Pancreas (tissue), 10 donors: ENCODE measurements at regions of chr15 and their contacts with region 1.

Region 1: GRCh38 chr15:71777216-71777950 is 33.0 kb upstream of the NR2E3 start:
- DNase-seq: no peak
- ATAC-seq: no peak
- H3K4me3 ChIP-seq: no peak overlapping the region
- H3K27ac ChIP-seq: no peak overlapping the region
- H3K4me1 ChIP-seq: no peaks in the 10 kb centered on the region
- H3K27me3 ChIP-seq: no peaks in the 10 kb centered on the region
- CTCF ChIP-seq: no peak

Region 2: GRCh38 chr15:72168111-72168808 is 390.9 kb after region 1 on chr15:
- intact Hi-C with region 1: loop called in 1 of 3 experiments (anchors 10 kb)
- DNase-seq: no peak
- ATAC-seq: peak in 2 of 4 donors; percentile 22 to 24
- H3K4me3 ChIP-seq: no peak overlapping the region
- H3K27ac ChIP-seq: no peak overlapping the region
- H3K4me1 ChIP-seq: no peaks in the 10 kb centered on the region
- H3K27me3 ChIP-seq: no peaks in the 10 kb centered on the region
- CTCF ChIP-seq: no peak